HAP-1 (cell line): ENCODE measurements at regions of chr5 and their contacts with region 1.

Region 1: GRCh38 chr5:116068028-116068632 is 16.7 kb upstream of the COMMD10 start:
- DNase-seq: peak; percentile 50 to 59
- H3K4me3 ChIP-seq: no peak overlapping the region
- H3K4me1 ChIP-seq: no peaks in the 10 kb centered on the region
- H3K27me3 ChIP-seq: peaks cover 5% of the 10 kb centered on the region; the same call in 1 of the 2 replicates

Region 2: GRCh38 chr5:115296124-115297022 is 771.8 kb before region 1 on chr5 and contains the start of gene CCDC112:
- in situ Hi-C with region 1: loop called (anchors 25 kb)
- DNase-seq: peak; percentile 46 to 92
- H3K4me3 ChIP-seq: peak within 1 kb of the TSS; percentile 58
- H3K4me1 ChIP-seq: peaks cover 5% of the 10 kb centered on the region; the same call in 1 of the 2 replicates
- H3K27me3 ChIP-seq: no peaks in the 10 kb centered on the region

Region 3: DNA sequence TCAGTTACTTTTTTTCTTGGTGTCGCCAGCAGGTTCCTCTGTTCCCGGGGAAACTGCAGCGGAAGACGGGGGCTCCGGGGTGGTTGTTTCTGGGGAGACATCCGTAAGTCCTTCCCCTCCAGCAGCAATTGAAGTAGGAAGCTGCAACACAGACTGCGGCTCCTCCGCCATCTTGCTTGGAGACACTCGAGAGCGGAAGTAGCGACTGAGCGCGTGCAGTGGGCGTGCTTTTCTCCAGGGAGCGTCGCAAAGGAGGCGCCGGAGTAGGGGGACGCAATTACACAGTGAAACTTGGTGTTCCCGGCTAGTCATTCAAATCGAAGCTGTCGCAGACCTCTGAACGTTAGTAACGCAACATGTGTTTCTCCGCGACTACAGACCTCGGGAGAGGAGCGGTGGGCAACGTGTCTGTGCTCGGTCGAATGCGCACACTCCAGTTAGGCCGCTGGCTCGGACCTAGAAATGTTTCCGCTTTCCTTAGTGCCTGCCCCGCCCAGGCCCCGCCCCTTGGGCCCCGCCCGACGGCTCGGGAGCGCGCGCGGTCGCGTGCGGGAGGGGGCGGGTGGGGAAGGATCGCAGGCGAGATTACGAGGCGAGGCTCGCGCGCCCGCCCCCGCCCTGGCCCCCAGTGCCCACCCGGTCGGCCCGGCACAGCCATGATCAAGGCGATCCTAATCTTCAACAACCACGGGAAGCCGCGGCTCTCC is 226.6 kb before region 1 on chr5 and contains the starts of genes AP3S1 and ATG12:
- in situ Hi-C with region 1: loop called (anchors 25 kb)
- DNase-seq: peak; percentile 87 to 93
- H3K4me3 ChIP-seq: peak within 1 kb of the TSS; percentile 68
- H3K4me1 ChIP-seq: peaks cover 20% of the 10 kb centered on the region
- H3K27me3 ChIP-seq: no peaks in the 10 kb centered on the region

Region 4: GRCh38 chr5:115948091-115948534 is 120.0 kb before region 1 on chr5:
- in situ Hi-C with region 1: no loop called
- DNase-seq: no peak
- H3K4me3 ChIP-seq: no peak overlapping the region
- H3K4me1 ChIP-seq: no peaks in the 10 kb centered on the region
- H3K27me3 ChIP-seq: no peaks in the 10 kb centered on the region

Region 5: GRCh38 chr5:117054909-117055308 is 986.8 kb after region 1 on chr5:
- in situ Hi-C with region 1: no loop called
- DNase-seq: no peak
- H3K4me3 ChIP-seq: no peak overlapping the region
- H3K4me1 ChIP-seq: no peaks in the 10 kb centered on the region; the same call in 1 of the 2 replicates
- H3K27me3 ChIP-seq: no peaks in the 10 kb centered on the region